ENCODE measurements at regions of chr21 and their contacts with region 1.

Region 1: DNA sequence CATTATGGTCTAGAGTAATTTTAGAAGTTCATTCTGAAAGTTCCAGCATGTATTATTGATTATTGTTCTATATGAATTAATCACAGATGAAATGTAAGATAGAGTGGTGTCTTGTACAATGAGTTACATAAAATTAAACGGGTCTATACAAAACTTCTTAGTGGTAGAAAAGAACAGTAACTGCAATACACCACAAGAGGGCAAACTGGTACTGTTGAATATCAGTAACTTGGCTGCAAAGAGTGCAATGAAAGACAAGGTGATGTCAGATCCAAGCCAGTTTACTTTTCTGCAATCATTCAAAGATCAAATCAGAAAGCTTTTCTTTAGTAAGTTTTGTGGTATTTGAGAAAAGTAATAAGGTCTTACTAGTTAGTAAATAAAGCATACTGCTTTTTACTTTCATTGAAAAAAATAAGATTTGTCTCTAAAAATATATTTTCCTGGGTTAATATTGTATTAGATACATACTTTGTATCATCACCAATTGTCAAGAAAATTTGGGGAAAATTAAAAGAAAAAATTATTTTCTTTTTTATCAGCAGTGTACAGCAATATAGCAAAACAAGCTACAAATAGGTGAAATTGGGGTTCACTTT is 66.4 kb upstream of the BTG3 start:
- DNase-seq: no peak
- H3K4me3 ChIP-seq: no peak overlapping the region
- H3K27ac ChIP-seq: no peak overlapping the region
- H3K4me1 ChIP-seq: no peaks in the 10 kb centered on the region
- H3K27me3 ChIP-seq: no peaks in the 10 kb centered on the region
- CTCF ChIP-seq: peak; percentile 59 to 68 (median 64)
- EP300 ChIP-seq: no peak
- POLR2A ChIP-seq: no peak

Region 2: DNA sequence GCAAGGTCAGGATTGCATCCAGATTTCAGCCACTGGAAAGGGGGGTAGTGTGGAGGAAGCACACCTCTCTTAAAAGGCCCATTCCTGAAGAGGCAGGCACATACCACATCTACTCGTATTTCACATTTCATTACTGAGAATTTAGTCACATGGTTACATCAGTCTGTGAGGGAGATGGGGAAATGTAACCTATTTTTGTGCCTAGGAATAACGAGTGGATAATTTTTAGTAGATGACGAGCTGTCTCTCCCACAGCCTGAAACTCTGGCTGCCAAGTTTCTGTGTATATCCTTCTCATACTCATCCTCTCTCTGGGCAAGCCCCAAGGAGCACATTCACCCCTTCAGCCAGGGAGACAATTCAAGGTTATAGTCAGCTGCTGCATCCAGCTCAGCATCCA is 150.4 kb after region 1 on chr21:
- intact Hi-C with region 1: no loop called
- DNase-seq: no peak
- H3K4me3 ChIP-seq: no peak overlapping the region
- H3K27ac ChIP-seq: no peak overlapping the region
- H3K4me1 ChIP-seq: no peaks in the 10 kb centered on the region
- H3K27me3 ChIP-seq: no peaks in the 10 kb centered on the region
- CTCF ChIP-seq: no peak
- EP300 ChIP-seq: no peak
- POLR2A ChIP-seq: no peak

Region 3: DNA sequence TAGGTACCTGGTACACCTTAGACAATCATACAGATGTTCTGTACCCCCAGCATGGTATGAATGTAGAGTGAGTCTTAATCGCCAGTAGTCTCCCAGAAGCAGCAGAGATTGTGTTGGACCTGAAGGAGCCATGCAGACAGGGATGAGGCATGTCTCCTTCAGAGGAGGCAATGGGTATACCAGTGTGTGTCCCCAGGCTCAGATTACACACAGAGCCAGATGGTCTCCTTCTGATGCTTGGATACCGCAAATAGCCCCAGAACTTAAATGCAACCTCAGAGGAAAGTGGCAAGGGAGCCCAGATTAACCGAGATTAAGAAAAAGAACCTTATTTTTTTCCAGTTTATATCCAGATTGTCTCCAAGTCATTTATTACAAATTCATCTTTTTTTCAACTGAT is 236.9 kb after region 1 on chr21:
- intact Hi-C with region 1: loop called (anchors 5 to 10 kb)
- DNase-seq: no peak
- H3K4me3 ChIP-seq: no peak overlapping the region
- H3K27ac ChIP-seq: no peak overlapping the region
- H3K4me1 ChIP-seq: no peaks in the 10 kb centered on the region
- H3K27me3 ChIP-seq: no peaks in the 10 kb centered on the region
- CTCF ChIP-seq: no peak
- EP300 ChIP-seq: no peak
- POLR2A ChIP-seq: no peak

Measured in ovary (tissue), 10 donors.